ENCODE measurements at regions of chr16 and their contacts with region 1.

Region 1: GRCh38 chr16:67159593-67160406 is at the starts of genes FBXL8 and TRADD:
- DNase-seq: peak; percentile 74 to 84 (median 80)
- H3K4me3 ChIP-seq: peak within 1 kb of the TSS; percentile 95
- H3K4me3 Mint-ChIP-seq: peak within 1 kb of the TSS; percentile 79 to 96 (median 94)
- H3K27ac ChIP-seq: peak within 1 kb of the TSS; percentile 93
- H3K27ac Mint-ChIP-seq: peak within 1 kb of the TSS; percentile 94 to 99 (median 98)
- H3K4me1 ChIP-seq: peaks cover 78% of the 10 kb centered on the region
- H3K4me1 Mint-ChIP-seq: peaks cover 45 to 77% (median 52%) of the 10 kb centered on the region in 3 donors
- H3K27me3 ChIP-seq: peaks cover 26% of the 10 kb centered on the region
- H3K27me3 Mint-ChIP-seq: peaks cover 24 to 29% of the 10 kb centered on the region in 2 donors
- total RNA-seq, gene FBXL8: 10.5 to 14.3 TPM
- total RNA-seq, gene TRADD: 23.8 to 28.7 TPM

Region 2: DNA sequence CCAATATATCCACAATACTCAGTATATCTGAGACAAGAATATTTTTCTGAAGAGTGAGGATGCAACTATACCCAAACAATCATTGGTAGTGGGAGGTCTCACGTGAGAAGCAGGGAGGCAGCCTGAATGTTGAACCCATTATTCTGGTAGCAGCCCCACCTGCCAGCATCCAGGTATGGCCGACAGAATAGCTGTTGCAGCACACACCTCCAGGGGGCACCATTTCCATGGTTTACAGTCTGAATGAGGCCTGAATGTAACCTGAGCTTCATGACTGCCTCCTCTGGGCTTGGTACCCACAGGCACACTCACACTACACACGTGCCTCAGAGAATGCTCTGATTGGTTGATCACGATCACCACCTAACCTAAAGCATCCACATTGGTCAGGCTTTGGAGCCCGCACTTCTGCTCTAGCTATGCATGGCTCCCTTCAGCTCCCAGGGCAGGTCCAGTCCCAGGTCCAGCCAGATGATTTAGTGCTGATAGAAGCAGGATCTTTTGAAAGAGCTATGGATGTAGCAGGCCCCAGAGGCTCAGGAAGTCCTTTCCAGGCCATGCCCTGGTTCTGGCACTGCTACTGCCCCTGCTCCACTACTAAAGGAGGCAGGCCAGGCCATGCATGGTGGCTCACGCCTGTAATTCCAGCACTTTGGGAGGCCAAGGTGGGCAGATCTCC is 141.9 kb before region 1 on chr16:
- CTCF ChIA-PET with region 1: interaction called, 123 read pairs
- POLR2A ChIA-PET with region 1: interaction called, 10 read pairs
- DNase-seq: peak; percentile 72 to 87 (median 77)
- H3K4me3 ChIP-seq: no peak overlapping the region
- H3K4me3 Mint-ChIP-seq: peak overlapping the region in 1 of 7 donors; percentile 61
- H3K27ac ChIP-seq: no peak overlapping the region
- H3K27ac Mint-ChIP-seq: peak overlapping the region in 3 of 8 donors; percentile 1 to 66 (median 64)
- H3K4me1 ChIP-seq: peaks cover 16% of the 10 kb centered on the region
- H3K4me1 Mint-ChIP-seq: peaks cover 2 to 9% (median 6%) of the 10 kb centered on the region in 3 donors
- H3K27me3 ChIP-seq: no peaks in the 10 kb centered on the region
- H3K27me3 Mint-ChIP-seq: peaks cover 0 to 3% of the 10 kb centered on the region in 2 donors

Region 3: DNA sequence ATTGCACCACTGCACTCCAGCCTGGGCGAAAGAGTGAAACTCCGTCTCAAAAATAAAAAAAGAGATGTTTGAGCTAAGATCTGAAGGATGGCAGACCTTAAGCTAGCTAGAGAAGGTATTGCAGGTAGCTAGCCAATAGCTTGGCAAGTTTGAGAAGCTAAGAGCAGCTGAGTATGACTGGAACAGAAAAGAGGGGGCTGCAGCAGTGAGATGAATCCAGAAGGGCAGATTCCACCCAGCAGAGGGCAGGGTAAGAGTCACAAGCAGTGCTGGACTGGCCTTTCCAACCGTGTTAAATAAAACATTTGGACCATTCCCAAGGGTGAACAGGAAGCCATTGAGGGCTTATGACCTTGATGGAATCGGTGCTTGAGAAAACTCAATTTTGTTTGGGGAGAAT is 55.7 kb before region 1 on chr16:
- CTCF ChIA-PET with region 1: interaction called, 63 read pairs
- POLR2A ChIA-PET with region 1: no interaction called
- DNase-seq: no peak
- H3K4me3 ChIP-seq: no peak overlapping the region
- H3K4me3 Mint-ChIP-seq: peak overlapping the region in 1 of 7 donors; percentile 54
- H3K27ac ChIP-seq: no peak overlapping the region
- H3K27ac Mint-ChIP-seq: peak overlapping the region in 2 of 8 donors; percentile 16 to 73
- H3K4me1 ChIP-seq: peaks cover 2% of the 10 kb centered on the region
- H3K4me1 Mint-ChIP-seq: peaks cover 0 to under 1% (median 0%) of the 10 kb centered on the region in 3 donors
- H3K27me3 ChIP-seq: no peaks in the 10 kb centered on the region
- H3K27me3 Mint-ChIP-seq: no peaks in the 10 kb centered on the region

Region 4: DNA sequence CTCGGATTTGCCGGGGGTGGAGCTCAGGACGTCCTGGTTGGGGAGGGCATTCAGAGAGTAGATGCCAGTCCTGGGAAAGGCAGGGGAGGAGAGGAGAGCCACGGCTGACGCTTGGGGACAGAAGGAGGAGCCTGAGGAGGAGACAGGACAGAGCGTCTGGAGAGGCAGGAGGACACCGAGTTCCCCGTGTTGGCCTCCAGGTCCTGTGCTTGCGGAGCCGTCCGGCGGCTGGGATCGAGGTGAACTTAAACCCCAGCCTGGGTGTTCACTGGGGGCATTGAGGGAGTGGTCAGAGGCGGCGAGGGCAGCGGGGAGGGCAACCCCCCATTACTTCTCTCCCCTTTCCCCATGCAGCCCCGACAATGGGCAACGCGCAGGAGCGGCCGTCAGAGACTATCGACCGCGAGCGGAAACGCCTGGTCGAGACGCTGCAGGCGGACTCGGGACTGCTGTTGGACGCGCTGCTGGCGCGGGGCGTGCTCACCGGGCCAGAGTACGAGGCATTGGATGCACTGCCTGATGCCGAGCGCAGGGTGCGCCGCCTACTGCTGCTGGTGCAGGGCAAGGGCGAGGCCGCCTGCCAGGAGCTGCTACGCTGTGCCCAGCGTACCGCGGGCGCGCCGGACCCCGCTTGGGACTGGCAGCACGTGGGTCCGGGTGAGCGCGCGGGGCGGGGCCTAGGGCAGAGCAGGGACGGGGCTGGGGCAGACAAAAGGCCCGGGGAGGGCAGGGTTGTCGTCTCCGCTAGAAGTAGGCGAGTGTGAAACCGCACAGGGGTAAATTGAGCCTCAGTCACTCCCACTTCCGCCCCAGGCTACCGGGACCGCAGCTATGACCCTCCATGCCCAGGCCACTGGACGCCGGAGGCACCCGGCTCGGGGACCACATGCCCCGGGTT is 14.3 kb after region 1 on chr16:
- CTCF ChIA-PET with region 1: interaction called, 80 read pairs
- POLR2A ChIA-PET with region 1: interaction called, 10 read pairs
- DNase-seq: peak in 4 of 5 donors; percentile 58 to 79 (median 61)
- H3K4me3 ChIP-seq: peak overlapping the region; percentile 58
- H3K4me3 Mint-ChIP-seq: peak overlapping the region; percentile 75 to 92 (median 87)
- H3K27ac ChIP-seq: no peak overlapping the region
- H3K27ac Mint-ChIP-seq: peak overlapping the region in 7 of 8 donors; percentile 18 to 91 (median 50)
- H3K4me1 ChIP-seq: peaks cover 38% of the 10 kb centered on the region
- H3K4me1 Mint-ChIP-seq: peaks cover 44 to 73% (median 48%) of the 10 kb centered on the region in 3 donors
- H3K27me3 ChIP-seq: peaks cover 24% of the 10 kb centered on the region
- H3K27me3 Mint-ChIP-seq: peaks cover 17 to 18% of the 10 kb centered on the region in 2 donors

Region 5: DNA sequence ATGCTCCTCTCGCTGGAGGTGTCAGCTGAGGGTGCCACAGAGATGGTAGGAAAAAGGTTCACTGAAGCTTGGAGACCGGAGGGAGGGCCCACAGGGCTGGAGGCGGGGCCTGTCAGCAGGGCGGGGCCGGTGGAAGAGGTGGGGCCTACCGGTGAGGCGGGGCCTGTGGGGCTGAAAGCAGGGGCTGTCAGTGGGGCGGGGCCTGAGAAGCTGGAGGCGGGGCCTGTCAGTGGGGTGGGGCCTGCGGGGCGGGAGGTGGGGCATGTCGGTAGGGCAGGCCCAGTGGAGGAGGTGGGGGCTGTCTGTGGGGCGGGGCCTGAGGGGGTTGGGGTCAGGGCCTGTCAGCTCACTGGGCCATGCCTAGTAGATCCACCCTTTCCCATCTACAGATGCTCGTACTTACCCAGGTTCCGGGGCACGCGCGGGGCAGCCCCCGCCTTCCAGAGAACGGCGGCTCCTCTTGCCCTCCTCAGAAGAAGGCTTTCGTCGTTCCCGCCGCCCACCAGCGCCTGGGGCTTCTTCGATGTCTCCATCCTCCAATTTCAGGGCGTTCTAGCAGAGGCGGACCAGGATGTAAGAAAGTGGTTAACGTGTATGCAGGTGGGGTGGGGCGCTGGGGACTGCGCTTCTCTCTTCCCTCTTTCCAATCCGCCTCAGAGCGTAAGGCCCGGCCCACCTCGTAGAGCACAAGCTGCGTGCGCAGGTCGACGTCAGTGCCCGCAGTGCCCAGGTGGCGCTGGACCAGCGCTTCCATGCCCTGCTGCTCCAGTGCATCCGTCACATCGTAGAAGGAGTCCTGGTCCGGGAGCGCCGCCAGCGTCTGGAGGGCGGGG is 77.0 kb after region 1 on chr16:
- CTCF ChIA-PET with region 1: no interaction called
- POLR2A ChIA-PET with region 1: no interaction called
- DNase-seq: peak; percentile 60 to 75 (median 64)
- H3K4me3 ChIP-seq: no peak overlapping the region
- H3K4me3 Mint-ChIP-seq: peak overlapping the region in 6 of 7 donors; percentile 38 to 71 (median 57)
- H3K27ac ChIP-seq: no peak overlapping the region
- H3K27ac Mint-ChIP-seq: peak overlapping the region; percentile 69 to 96 (median 92)
- H3K4me1 ChIP-seq: no peaks in the 10 kb centered on the region
- H3K4me1 Mint-ChIP-seq: peaks cover 7 to 11% (median 8%) of the 10 kb centered on the region in 3 donors
- H3K27me3 ChIP-seq: no peaks in the 10 kb centered on the region
- H3K27me3 Mint-ChIP-seq: peaks cover 0 to 2% of the 10 kb centered on the region in 2 donors

Region 6: DNA sequence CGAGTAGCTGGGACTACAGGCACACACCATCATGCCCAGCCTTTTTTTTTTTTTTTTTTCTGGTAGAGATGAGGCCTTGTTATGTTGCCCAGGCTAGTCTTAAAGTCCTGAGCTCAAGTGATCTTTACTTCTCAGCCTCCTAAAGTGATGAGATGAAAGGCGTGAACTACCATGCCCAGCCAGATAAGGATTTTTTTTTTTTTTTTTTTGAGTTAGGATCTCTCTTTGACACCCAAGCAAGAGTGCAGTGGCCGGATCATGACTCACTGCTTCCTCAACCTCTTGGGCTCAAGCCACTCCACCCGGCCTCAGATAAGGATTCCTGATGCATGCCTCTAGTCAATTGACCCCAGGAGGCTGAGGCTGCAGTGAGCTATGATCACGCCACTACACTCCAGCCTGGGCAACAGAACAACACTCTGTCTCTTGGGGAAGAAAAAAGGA is 108.4 kb after region 1 on chr16:
- CTCF ChIA-PET with region 1: no interaction called
- POLR2A ChIA-PET with region 1: no interaction called
- DNase-seq: peak in 1 of 5 donors; percentile 16
- H3K4me3 ChIP-seq: no peak overlapping the region
- H3K4me3 Mint-ChIP-seq: no peak overlapping the region
- H3K27ac ChIP-seq: no peak overlapping the region
- H3K27ac Mint-ChIP-seq: no peak overlapping the region
- H3K4me1 ChIP-seq: no peaks in the 10 kb centered on the region
- H3K4me1 Mint-ChIP-seq: no peaks in the 10 kb centered on the region
- H3K27me3 ChIP-seq: no peaks in the 10 kb centered on the region
- H3K27me3 Mint-ChIP-seq: peaks cover under 1 to 13% of the 10 kb centered on the region in 2 donors

Region 7: GRCh38 chr16:67447508-67448076 is 287.8 kb after region 1 on chr16:
- CTCF ChIA-PET with region 1: no interaction called
- POLR2A ChIA-PET with region 1: no interaction called
- DNase-seq: peak in 3 of 5 donors; percentile 17 to 18 (median 18)
- H3K4me3 ChIP-seq: no peak overlapping the region
- H3K4me3 Mint-ChIP-seq: no peak overlapping the region
- H3K27ac ChIP-seq: no peak overlapping the region
- H3K27ac Mint-ChIP-seq: no peak overlapping the region
- H3K4me1 ChIP-seq: no peaks in the 10 kb centered on the region
- H3K4me1 Mint-ChIP-seq: peaks cover 5 to 12% (median 7%) of the 10 kb centered on the region in 3 donors
- H3K27me3 ChIP-seq: no peaks in the 10 kb centered on the region
- H3K27me3 Mint-ChIP-seq: no peaks in the 10 kb centered on the region